Prostate gland (tissue), 2 donors: ENCODE measurements at regions of chr2 and their contacts with region 1.

Region 1: DNA sequence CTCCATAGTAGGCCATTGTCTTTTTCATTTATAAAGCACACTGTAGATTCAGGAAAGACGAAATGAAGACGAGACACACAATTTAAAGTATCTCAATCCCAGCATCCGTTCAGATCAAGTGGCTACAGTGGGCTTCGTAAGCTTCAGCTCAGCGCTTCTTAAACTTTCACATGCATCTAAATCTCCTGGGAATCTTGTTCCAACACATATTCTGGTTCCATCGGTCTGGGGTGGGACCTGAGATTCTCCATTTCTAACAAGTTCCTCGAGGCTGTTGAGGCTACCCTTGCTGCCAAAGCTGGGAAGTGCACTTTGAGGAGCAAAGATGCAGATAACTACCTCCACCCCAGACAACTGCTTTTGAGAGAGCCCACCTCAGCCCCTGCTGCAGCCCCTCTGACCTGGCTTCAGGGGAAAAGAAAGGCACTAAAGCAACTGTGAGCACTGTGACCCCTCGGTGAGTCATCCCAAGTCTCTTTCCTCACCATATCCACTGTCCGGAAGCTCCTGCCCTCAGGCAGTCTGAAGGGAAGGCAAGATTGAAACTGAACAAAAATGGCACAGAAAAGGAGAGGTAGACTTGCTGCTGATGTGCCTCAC is 201.1 kb upstream of the FBXO11 start:
- DNase-seq: no peak
- H3K4me3 ChIP-seq: no peak overlapping the region
- H3K27ac ChIP-seq: no peak overlapping the region
- H3K4me1 ChIP-seq: no peaks in the 10 kb centered on the region
- H3K27me3 ChIP-seq: no peaks in the 10 kb centered on the region
- CTCF ChIP-seq: no peak
- POLR2A ChIP-seq: no peak

Region 2: DNA sequence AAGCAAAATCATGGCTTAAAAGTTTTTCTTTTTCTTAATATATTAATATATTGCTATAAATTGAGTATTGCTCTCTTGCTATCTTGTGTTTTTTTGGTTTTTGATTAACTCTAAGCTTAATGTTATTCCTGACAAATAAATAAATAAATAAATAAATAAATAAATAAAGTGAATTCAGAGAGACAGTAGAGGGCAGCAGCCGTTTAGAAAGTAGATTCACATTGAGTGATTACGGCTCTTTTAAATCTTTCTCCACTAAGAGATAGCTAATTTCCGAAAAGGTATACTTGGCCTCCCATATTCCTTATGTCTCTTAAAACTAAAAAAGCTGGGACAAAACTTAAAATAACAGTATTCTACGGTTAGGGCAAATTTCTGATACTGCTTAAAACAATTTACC is 670.1 kb before region 1 on chr2:
- intact Hi-C with region 1: loop called (anchors 10 kb)
- DNase-seq: no peak
- H3K4me3 ChIP-seq: no peak overlapping the region
- H3K27ac ChIP-seq: no peak overlapping the region
- H3K4me1 ChIP-seq: no peaks in the 10 kb centered on the region
- H3K27me3 ChIP-seq: no peaks in the 10 kb centered on the region
- CTCF ChIP-seq: peak in 2 of 4 experiments; percentile 20 to 57
- POLR2A ChIP-seq: no peak

Region 3: GRCh38 chr2:47767880-47768609 is 339.4 kb before region 1 on chr2:
- intact Hi-C with region 1: loop called (anchors 1 kb)
- DNase-seq: peak; percentile 38
- H3K4me3 ChIP-seq: no peak overlapping the region
- H3K27ac ChIP-seq: no peak overlapping the region
- H3K4me1 ChIP-seq: no peaks in the 10 kb centered on the region
- H3K27me3 ChIP-seq: no peaks in the 10 kb centered on the region
- CTCF ChIP-seq: peak; percentile 91 to 96 (median 94)
- POLR2A ChIP-seq: no peak

Region 4: DNA sequence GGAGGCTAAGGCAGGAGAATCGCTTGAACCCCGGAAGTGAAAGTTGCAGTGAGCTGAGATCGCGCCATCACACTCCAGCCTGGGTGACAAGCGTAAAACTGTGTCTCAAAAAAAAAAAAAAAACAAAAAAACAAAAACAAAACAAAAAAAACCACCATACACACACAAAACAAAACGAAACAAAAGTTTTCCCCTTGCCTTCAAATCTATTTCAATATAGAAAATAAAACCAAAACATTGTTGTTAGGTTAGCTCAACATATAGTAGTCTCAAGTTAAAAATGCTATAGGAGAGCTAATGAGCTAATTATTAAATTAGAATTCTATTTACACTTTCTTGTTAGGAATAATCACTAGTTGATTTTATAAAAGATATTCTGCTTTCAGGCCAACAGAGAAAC is 244.5 kb before region 1 on chr2:
- intact Hi-C with region 1: loop called (anchors 5 kb)
- DNase-seq: no peak
- H3K4me3 ChIP-seq: no peak overlapping the region
- H3K27ac ChIP-seq: no peak overlapping the region
- H3K4me1 ChIP-seq: no peaks in the 10 kb centered on the region
- H3K27me3 ChIP-seq: no peaks in the 10 kb centered on the region
- CTCF ChIP-seq: no peak
- POLR2A ChIP-seq: no peak

Region 5: DNA sequence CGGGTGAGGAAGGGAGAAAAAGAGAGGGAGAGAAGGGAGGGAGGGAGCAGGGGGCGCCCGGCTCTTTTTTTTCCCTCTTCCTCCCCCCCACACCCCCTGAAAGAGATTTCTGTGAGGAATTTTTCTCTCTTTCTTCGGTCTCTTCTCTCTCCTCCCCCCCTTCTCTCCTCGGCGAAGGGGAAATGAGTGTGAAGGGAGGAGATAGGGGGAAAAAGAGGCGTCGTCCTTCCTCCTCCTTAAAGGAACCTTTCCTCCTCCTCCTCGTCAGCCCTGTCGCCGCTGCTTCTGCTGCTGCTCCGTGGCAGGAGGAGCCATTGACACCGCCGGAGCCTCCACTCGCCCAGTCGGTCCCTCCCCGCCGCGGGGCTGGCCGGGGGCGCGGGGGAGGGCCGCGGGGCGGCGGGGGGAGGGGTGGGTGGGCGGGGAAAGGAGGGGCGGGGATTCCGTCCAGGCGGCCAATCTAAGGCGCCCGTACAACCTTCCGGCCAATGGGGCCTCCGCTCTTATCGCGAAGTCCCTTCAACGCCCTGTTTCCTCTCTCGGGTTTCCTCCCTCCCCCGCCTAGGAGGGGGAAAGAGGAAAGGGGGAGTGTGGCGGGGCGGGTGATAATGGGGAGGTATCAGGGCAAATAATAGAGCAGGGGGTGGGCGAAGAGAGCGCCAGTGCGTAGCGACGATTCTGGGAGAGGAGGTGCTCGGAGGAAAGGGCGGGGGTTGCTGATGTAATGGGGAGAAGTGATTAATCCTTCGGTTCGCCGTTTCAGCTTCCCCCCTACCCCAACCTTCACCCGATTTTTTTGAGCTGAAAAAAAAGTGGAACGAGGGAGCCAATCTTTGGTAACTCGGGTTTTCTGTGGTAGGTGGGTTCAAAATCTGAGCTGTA is 201.0 kb before region 1 on chr2 and contains the start of gene FBXO11:
- intact Hi-C with region 1: loop called (anchors 2 kb)
- DNase-seq: peak; percentile 95
- H3K4me3 ChIP-seq: peak within 1 kb of the TSS; percentile 69 to 82
- H3K27ac ChIP-seq: peak within 1 kb of the TSS; percentile 98 to 99
- H3K4me1 ChIP-seq: no peaks in the 10 kb centered on the region
- H3K27me3 ChIP-seq: no peaks in the 10 kb centered on the region
- CTCF ChIP-seq: peak in 2 of 4 experiments; percentile 21 to 60
- POLR2A ChIP-seq: peak; percentile 85
- total RNA-seq, gene FBXO11: 48.4 to 54.2 TPM

Region 6: GRCh38 chr2:47946593-47946992 is 160.8 kb before region 1 on chr2:
- intact Hi-C with region 1: no loop called
- DNase-seq: no peak
- H3K4me3 ChIP-seq: no peak overlapping the region
- H3K27ac ChIP-seq: no peak overlapping the region
- H3K4me1 ChIP-seq: no peaks in the 10 kb centered on the region
- H3K27me3 ChIP-seq: no peaks in the 10 kb centered on the region
- CTCF ChIP-seq: no peak
- POLR2A ChIP-seq: no peak

Region 7: GRCh38 chr2:48482313-48482712 is 374.9 kb after region 1 on chr2:
- intact Hi-C with region 1: no loop called
- DNase-seq: no peak
- H3K4me3 ChIP-seq: no peak overlapping the region
- H3K27ac ChIP-seq: peak overlapping the region; percentile 30 to 55
- H3K4me1 ChIP-seq: no peaks in the 10 kb centered on the region
- H3K27me3 ChIP-seq: no peaks in the 10 kb centered on the region
- CTCF ChIP-seq: no peak
- POLR2A ChIP-seq: no peak